SK-N-SH (cell line): ENCODE measurements at regions of chr11 and their contacts with region 1.

Region 1: DNA sequence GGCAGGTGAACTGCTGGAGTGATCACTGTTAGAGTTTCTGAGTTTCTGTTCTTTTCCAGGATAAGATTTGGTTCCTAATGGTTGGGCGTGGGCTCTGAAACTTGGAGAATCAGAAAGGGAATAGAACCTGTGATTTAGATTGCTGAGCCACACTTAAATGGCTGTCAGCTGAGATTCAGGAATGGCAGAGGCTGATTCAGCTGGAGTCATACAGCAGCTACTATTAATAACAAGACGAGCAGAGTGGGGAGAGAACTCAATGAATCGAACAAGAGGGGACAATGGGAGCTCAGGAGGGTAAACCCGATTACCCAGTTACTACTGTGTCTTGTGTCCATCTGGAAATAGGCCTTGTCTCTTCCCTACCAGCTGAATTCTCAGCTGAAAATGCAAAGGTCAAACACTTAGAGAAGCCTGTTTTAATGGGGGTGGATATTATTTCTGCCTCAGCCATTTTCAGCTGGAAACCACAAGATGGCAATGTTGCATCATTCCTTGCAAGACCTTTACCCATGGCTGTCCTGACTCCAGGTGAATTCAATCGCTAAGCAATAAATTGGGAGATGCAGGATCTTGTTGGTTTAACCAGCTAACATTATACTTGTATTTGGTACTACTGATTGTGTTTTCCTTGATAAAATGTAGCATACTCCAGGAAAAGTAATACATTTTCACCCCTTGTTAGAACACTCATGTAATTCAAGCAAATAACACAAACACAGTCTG is 104.5 kb upstream of the RAG2 start:
- DNase-seq: peak; percentile 73
- H3K4me3 ChIP-seq: peak overlapping the region in 1 of 2 experiments; percentile 33; a peak in 1 of 4 replicates
- H3K27ac ChIP-seq: peak overlapping the region in 1 of 2 experiments; percentile 58; a peak in 2 of 4 replicates
- H3K4me1 ChIP-seq: peaks cover 0 to 3% of the 10 kb centered on the region in 2 experiments; a peak in 2 of 4 replicates
- H3K27me3 ChIP-seq: peaks cover under 1% of the 10 kb centered on the region; the same call in 1 of the 2 replicates
- CTCF ChIP-seq: peak; percentile 92
- EP300 ChIP-seq: 0 out of 4 replicates have a peak, but pooled peaks of 1 of the 2 experiments have one; percentile 12
- RAD21 ChIP-seq: peak; percentile 99

Region 2: DNA sequence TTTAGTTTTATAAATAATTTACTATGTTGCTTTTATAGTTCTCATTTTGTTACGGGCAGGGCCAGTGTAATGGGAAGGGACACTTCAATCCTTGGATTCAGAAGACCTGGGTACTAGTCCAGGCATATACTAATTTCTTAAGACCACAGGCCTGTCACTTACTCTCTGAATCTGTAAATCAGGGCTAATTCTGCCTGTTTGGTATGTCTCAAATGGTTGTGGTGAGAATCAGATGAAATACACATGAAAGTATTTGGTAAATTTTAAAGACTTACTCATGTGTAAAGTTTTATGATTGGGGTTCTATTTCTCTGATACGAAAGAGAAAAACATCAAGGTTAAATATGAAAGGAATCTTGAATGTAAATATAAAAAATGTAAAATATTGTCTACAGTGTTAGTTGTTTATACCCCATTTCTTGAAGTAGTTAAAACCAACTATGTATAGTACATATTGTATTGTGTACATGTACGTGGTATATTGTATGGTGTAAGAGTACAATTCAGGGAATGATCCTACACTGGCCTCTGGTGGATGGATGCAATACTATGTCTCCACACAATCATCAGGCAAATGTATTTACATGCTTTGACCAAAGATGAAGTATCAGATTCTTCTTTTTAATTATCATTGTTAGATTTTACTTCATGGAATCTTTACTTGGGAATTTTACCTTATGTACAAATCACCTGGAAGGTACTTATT is 79.9 kb before region 1 on chr11:
- CTCF ChIA-PET with region 1: interaction called, 16 read pairs
- POLR2A ChIA-PET with region 1: no interaction called
- DNase-seq: peak; percentile 32
- H3K4me3 ChIP-seq: no peak overlapping the region
- H3K27ac ChIP-seq: peak overlapping the region in 1 of 2 experiments; percentile 100; a peak in 2 of 4 replicates
- H3K4me1 ChIP-seq: peaks cover 16 to 52% of the 10 kb centered on the region in 2 experiments; a peak in 3 of 4 replicates
- H3K27me3 ChIP-seq: no peaks in the 10 kb centered on the region
- CTCF ChIP-seq: peak; percentile 83
- EP300 ChIP-seq: no peak
- RAD21 ChIP-seq: peak; percentile 98

Region 3: GRCh38 chr11:36729825-36730224 is 27.3 kb after region 1 on chr11:
- CTCF ChIA-PET with region 1: interaction called, 16 read pairs
- POLR2A ChIA-PET with region 1: no interaction called
- DNase-seq: no peak
- H3K4me3 ChIP-seq: no peak overlapping the region
- H3K27ac ChIP-seq: no peak overlapping the region
- H3K4me1 ChIP-seq: no peaks in the 10 kb centered on the region
- H3K27me3 ChIP-seq: no peaks in the 10 kb centered on the region; the same call in 1 of the 2 replicates
- CTCF ChIP-seq: no peak
- EP300 ChIP-seq: no peak
- RAD21 ChIP-seq: no peak

Region 4: GRCh38 chr11:36738292-36738861 is 35.9 kb after region 1 on chr11:
- CTCF ChIA-PET with region 1: interaction called, 48 read pairs
- POLR2A ChIA-PET with region 1: no interaction called
- DNase-seq: no peak
- H3K4me3 ChIP-seq: no peak overlapping the region
- H3K27ac ChIP-seq: no peak overlapping the region
- H3K4me1 ChIP-seq: no peaks in the 10 kb centered on the region
- H3K27me3 ChIP-seq: no peaks in the 10 kb centered on the region
- CTCF ChIP-seq: no peak
- EP300 ChIP-seq: no peak
- RAD21 ChIP-seq: no peak